Activated CD4-positive, alpha-beta T cell treated with anti-CD3 and anti-CD28 coated beads, Interleukin-2, amount 10 ng/mL, durations not matched to agents 7 days and 5 days (primary cell): ENCODE measurements at regions of chr20 and their contacts with region 1.

Region 1: DNA sequence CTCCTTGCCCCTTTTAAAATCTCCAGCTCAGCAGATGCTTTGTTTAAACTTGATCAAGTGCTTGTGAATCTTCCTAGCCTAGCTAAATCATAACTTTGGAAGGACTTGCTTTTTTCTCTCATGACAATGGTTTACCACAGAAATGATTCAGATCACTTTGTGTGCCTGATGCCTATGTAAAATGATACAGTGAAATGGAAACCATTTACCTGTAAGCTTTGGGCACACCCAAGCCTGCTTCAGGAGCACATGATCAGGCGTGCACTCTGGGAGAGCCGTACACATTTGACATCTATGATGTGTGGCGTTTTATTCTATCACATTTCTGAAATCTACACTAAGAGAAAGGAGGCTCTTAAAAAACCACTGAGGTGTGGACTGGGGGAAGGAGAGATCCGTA is 41.1 kb downstream of the PTPN1 start:
- DNase-seq: peak; percentile 56
- H3K4me3 Mint-ChIP-seq: peak overlapping the region; percentile 12
- H3K27ac Mint-ChIP-seq: peak overlapping the region; percentile 70
- H3K4me1 Mint-ChIP-seq: peaks cover 35% of the 10 kb centered on the region
- H3K27me3 Mint-ChIP-seq: no peaks in the 10 kb centered on the region

Region 2: GRCh38 chr20:50569864-50570836 is 18.9 kb after region 1 on chr20:
- CTCF ChIA-PET with region 1: interaction called, 13 read pairs
- POLR2A ChIA-PET with region 1: interaction called, 4 read pairs
- DNase-seq: peak; percentile 61
- H3K4me3 Mint-ChIP-seq: peak overlapping the region; percentile 23
- H3K27ac Mint-ChIP-seq: peak overlapping the region; percentile 85
- H3K4me1 Mint-ChIP-seq: peaks cover 72% of the 10 kb centered on the region
- H3K27me3 Mint-ChIP-seq: no peaks in the 10 kb centered on the region